ENCODE measurements at regions of chr18 and their contacts with region 1.

Region 1: GRCh38 chr18:72985686-72986085 is 117.9 kb upstream of the NETO1 start:
- DNase-seq: no peak
- H3K4me3 ChIP-seq: no peak overlapping the region
- H3K27ac ChIP-seq: no peak overlapping the region
- H3K4me1 ChIP-seq: no peaks in the 10 kb centered on the region
- H3K27me3 ChIP-seq: no peaks in the 10 kb centered on the region
- CTCF ChIP-seq: no peak

Region 2: DNA sequence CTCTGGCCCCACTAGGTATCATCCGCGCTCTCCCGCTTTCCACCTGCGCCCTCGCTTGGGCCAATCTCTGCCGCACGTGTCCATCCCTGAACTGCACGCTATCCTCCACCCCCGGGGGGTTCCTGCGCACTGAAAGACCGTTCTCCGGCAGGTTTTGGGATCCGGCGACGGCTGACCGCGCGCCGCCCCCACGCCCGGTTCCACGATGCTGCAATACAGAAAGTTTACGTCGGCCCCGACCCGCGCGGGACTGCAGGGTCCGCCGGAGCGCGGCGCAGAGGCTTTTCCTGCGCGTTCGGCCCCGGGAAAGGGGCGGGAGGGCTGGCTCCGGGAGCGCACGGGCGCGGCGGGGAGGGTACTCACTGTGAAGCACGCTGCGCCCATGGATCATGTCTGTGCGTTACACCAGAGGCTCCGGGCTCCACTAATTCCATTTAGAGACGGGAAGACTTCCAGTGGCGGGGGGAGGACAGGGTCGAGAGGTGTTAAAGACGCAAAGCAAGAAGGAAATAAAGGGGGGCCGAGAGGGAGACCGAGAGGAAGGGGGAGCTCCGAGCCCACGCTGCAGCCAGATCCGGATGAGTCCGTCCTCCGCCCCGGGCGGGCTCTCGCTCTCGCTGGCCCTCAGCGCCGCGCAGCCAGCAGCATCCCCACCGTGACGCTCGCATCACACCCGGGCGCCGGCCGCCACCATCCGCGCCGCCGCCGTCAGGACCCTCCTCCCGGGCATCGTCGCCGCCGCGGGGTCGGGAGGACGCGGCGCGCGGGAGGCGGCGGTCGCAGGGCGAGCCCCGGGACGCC is 118.6 kb before region 1 on chr18:
- CTCF ChIA-PET with region 1: no interaction called
- POLR2A ChIA-PET with region 1: no interaction called
- intact Hi-C with region 1: no loop called
- DNase-seq: no peak
- H3K4me3 ChIP-seq: no peak overlapping the region
- H3K27ac ChIP-seq: no peak overlapping the region
- H3K4me1 ChIP-seq: peaks cover 17% of the 10 kb centered on the region
- H3K27me3 ChIP-seq: no peaks in the 10 kb centered on the region
- CTCF ChIP-seq: no peak

Region 3: DNA sequence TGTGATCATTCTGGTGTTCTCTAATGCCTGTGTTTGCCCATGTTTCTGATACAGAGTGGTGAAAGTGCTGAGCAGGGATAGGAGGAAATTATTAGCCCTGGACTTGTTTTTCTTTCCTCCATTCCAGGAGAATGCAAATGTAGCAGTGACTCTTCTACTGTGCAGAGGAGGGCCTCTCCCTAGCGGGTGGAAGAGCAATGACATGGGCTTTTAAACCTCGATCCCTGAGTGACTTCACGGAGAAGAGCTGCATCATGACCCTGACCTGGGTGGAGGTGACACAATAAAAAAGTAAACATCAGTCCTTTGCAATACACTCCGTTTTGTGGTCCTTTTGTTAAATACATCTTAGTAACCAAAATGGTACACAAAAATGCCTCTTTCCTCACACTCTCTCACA is 49.9 kb before region 1 on chr18:
- CTCF ChIA-PET with region 1: no interaction called
- POLR2A ChIA-PET with region 1: no interaction called
- intact Hi-C with region 1: loop called (anchors 2 kb)
- DNase-seq: no peak
- H3K4me3 ChIP-seq: no peak overlapping the region
- H3K27ac ChIP-seq: no peak overlapping the region
- H3K4me1 ChIP-seq: no peaks in the 10 kb centered on the region
- H3K27me3 ChIP-seq: no peaks in the 10 kb centered on the region
- CTCF ChIP-seq: no peak

Region 4: GRCh38 chr18:73331212-73331772 is 345.6 kb after region 1 on chr18:
- CTCF ChIA-PET with region 1: no interaction called
- POLR2A ChIA-PET with region 1: no interaction called
- intact Hi-C with region 1: no loop called
- DNase-seq: no peak
- H3K4me3 ChIP-seq: no peak overlapping the region
- H3K27ac ChIP-seq: no peak overlapping the region
- H3K4me1 ChIP-seq: peaks cover 9% of the 10 kb centered on the region; the same call in 1 of the 2 replicates
- H3K27me3 ChIP-seq: no peaks in the 10 kb centered on the region
- CTCF ChIP-seq: no peak

Measured in PC-9 (cell line).